K562 (cell line): ENCODE measurements at regions of chr19 and their contacts with region 1.

Region 1: DNA sequence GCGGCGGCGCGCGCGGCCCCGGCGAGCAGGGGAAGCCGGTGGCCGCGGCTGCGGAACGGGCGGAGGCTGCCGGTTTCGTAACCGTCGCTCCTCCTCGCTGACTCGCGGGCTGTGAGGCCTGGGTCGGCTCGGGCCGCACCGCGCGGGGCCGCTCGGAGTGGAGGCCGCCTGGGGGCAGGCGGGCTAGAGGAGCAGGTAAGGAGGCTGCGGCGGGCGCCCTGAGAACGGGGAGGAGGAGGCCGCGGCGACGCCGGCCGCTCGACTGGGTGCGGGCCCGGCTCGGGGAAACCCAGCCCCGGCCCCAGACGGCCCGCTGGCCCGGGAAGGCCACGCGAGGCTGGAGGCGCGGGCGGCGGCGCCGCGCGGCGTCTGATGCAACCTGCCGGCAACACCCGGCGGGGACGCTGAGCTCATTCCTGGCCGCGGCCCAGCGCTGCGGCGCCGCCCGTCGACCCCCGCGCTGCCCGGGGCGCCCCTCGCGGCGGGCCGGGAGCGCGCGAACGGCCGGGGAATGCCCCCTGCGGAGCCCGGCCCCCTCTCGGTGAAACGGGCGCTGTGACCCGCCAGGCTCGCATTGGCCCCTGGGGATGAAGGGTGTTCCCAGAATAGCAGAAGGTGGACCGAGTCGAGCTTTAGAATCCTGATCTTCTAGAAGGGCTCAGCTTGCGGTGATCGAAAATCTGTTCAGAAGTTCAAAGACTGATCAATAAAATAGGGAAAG is at the start of gene CEBPG:
- DNase-seq: peak; percentile 68 to 83 (median 79)
- ATAC-seq: peak; percentile 64
- H3K4me3 ChIP-seq: peak within 1 kb of the TSS; percentile 88
- H3K27ac ChIP-seq: peak within 1 kb of the TSS; percentile 99
- H3K4me1 ChIP-seq: peaks cover 19 to 21% of the 10 kb centered on the region in 2 experiments; a peak in 4 of 5 replicates
- H3K27me3 ChIP-seq: peaks cover 0 to 5% of the 10 kb centered on the region in 2 experiments; a peak in 1 of 5 replicates
- CTCF ChIP-seq: peak; percentile 34 to 66 (median 41); a peak in 4 of 6 replicates
- EP300 ChIP-seq: peak; percentile 80
- POLR2A ChIP-seq: peak; percentile 65
- RAD21 ChIP-seq: no peak
- polyA plus RNA-seq, gene CEBPG: 9.5 to 9.8 TPM

Region 2: DNA sequence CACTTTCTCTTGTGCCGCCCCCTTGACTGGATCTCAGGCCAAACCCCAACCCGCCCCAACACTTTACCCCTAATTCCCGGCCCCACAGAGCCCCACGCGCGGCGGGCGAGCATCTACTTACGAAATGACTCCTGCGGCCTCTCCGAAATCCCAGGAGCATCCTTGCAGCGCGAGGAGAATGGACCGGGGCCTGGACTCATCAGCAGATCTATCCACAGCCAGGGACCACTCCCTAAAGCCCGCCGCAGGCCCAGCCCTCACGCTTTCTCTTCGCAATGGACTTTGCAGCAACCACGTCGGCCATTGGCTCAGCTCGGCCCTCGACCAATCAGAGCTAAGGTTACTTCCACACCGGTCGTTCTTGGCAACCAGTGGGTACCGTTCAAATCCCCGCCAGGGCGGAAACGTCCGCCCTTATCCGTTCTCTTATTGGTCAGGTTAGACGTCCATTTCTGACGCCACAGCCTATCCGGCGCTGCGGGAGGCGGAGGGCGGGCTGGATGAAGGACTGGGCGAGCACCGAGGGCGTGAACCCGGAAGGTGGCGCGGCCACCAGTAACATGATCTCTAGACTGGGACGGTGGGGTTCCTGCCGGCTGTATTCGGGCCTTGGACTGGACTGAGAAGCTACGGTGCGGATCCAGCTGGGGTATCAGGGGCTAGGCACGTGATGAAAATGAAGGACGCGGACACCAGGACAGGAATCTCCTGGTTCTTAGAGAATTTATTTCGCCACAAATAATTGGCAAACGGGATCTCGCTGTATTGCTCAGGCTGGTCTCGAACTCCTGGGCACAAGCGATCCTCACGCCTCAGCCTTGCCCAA is 401.9 kb before region 1 on chr19 and contains the starts of genes CEP89 and FAAP24:
- CTCF ChIA-PET with region 1: no interaction called
- POLR2A ChIA-PET with region 1: no interaction called
- in situ Hi-C with region 1: no loop called
- intact Hi-C with region 1: loop called (anchors 10 kb)
- DNase-seq: peak; percentile 99 to 100 (median 100)
- ATAC-seq: peak; percentile 100
- H3K4me3 ChIP-seq: peak within 1 kb of the TSS; percentile 72
- H3K27ac ChIP-seq: peak within 1 kb of the TSS; percentile 70
- H3K4me1 ChIP-seq: peaks cover 0 to 18% of the 10 kb centered on the region in 2 experiments; a peak in 4 of 5 replicates
- H3K27me3 ChIP-seq: no peaks in the 10 kb centered on the region
- CTCF ChIP-seq: no peak; a peak in 1 of 6 replicates
- EP300 ChIP-seq: peak; percentile 36
- POLR2A ChIP-seq: peak; percentile 88
- RAD21 ChIP-seq: no peak
- polyA plus RNA-seq, gene CEP89: 5.5 to 7.0 TPM
- polyA plus RNA-seq, gene FAAP24: 16.0 to 21.6 TPM

Region 3: GRCh38 chr19:33348301-33349010 is 25.4 kb before region 1 on chr19:
- CTCF ChIA-PET with region 1: no interaction called
- POLR2A ChIA-PET with region 1: interaction called, 11 read pairs
- in situ Hi-C with region 1: no loop called
- intact Hi-C with region 1: no loop called
- DNase-seq: no peak
- ATAC-seq: peak; percentile 66
- H3K4me3 ChIP-seq: no peak overlapping the region
- H3K27ac ChIP-seq: no peak overlapping the region
- H3K4me1 ChIP-seq: peaks cover 0 to 7% of the 10 kb centered on the region in 2 experiments; a peak in 1 of 5 replicates
- H3K27me3 ChIP-seq: peaks cover 18 to 25% of the 10 kb centered on the region in 2 experiments
- CTCF ChIP-seq: no peak
- EP300 ChIP-seq: no peak
- POLR2A ChIP-seq: no peak
- RAD21 ChIP-seq: no peak

Region 4: DNA sequence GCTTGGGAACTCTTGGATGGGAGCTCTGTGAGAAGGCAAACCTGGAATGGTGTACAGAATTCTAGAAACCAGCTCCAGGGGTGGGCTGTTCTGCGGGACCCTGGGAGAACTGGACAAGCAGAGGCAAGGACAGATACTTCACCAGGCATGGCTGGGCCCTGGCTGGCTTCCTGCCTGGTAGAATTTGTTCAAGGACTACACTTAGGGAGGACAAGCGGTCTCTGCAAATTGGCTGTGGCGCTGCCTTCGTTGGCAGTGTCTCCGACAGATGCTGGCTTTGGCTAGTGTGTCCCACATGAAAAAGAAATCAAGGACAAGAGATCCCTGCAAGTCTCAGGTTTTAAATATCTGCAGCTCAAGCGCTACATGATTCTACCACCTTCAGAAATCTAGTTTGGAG is 12.1 kb after region 1 on chr19:
- CTCF ChIA-PET with region 1: no interaction called
- POLR2A ChIA-PET with region 1: interaction called, 50 read pairs
- in situ Hi-C with region 1: no loop called
- intact Hi-C with region 1: no loop called
- DNase-seq: no peak
- ATAC-seq: no peak
- H3K4me3 ChIP-seq: no peak overlapping the region
- H3K27ac ChIP-seq: no peak overlapping the region
- H3K4me1 ChIP-seq: peaks cover 0 to 17% of the 10 kb centered on the region in 2 experiments; a peak in 2 of 5 replicates
- H3K27me3 ChIP-seq: no peaks in the 10 kb centered on the region
- CTCF ChIP-seq: no peak
- EP300 ChIP-seq: no peak
- POLR2A ChIP-seq: no peak
- RAD21 ChIP-seq: no peak

Region 5: DNA sequence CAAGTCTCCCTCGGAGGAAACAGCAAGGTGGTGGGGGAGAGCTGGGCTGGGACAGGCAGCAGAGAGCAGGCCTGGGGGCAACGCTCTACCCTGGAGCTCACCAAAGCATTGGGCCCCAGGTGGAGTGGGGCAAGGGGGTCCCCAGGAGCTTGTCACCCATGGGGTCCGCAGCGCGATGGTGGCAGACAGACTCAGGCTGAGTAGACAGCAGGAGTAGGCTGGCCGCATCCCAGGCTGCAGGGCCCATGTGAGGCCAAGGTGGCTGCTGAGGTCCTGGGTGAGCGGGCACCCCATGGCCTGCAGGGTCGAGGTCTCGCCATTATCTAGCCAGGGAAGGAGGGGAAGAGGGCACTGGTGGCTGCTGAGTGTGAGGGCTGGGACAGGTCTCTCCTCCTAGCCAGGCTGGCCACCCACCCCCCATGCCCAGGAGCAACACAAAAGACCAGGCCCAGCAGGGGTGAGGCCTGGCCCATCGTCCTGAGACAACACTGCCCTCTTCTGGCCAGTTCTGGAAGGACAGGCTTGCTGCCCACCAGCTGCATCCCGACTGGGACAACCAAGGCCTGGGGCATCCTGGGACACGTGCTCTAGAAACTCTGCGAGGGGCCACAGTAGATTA is 32.8 kb after region 1 on chr19:
- CTCF ChIA-PET with region 1: no interaction called
- POLR2A ChIA-PET with region 1: interaction called, 10 read pairs
- in situ Hi-C with region 1: no loop called
- intact Hi-C with region 1: no loop called
- DNase-seq: peak; percentile 75 to 88 (median 85)
- ATAC-seq: peak; percentile 88
- H3K4me3 ChIP-seq: no peak overlapping the region
- H3K27ac ChIP-seq: no peak overlapping the region
- H3K4me1 ChIP-seq: peaks cover 0 to 32% of the 10 kb centered on the region in 2 experiments; a peak in 2 of 5 replicates
- H3K27me3 ChIP-seq: peaks cover 0 to 16% of the 10 kb centered on the region in 2 experiments; a peak in 1 of 5 replicates
- CTCF ChIP-seq: peak; percentile 87 to 88 (median 87)
- EP300 ChIP-seq: no peak
- POLR2A ChIP-seq: no peak
- RAD21 ChIP-seq: peak; percentile 84 to 93